WTC11 (cell line): ENCODE measurements at regions of chr19 and their contacts with region 1.

Region 1: GRCh38 chr19:30498707-30499106 is 126.5 kb downstream of the ZNF536 start:
- DNase-seq: peak; percentile 81
- ATAC-seq: peak; percentile 97
- H3K4me3 Mint-ChIP-seq: no peak overlapping the region
- H3K27ac Mint-ChIP-seq: no peak overlapping the region
- H3K4me1 Mint-ChIP-seq: peaks cover 3% of the 10 kb centered on the region
- H3K27me3 Mint-ChIP-seq: no peaks in the 10 kb centered on the region
- CTCF ChIP-seq: peak; percentile 38; the same call in 1 of the 2 replicates

Region 2: GRCh38 chr19:30419568-30420180 is 79.0 kb before region 1 on chr19:
- CTCF ChIA-PET with region 1: no interaction called
- POLR2A ChIA-PET with region 1: no interaction called
- DNase-seq: no peak
- ATAC-seq: no peak
- H3K4me3 Mint-ChIP-seq: no peak overlapping the region
- H3K27ac Mint-ChIP-seq: no peak overlapping the region
- H3K4me1 Mint-ChIP-seq: 0 out of 2 replicates have a peak, but pooled peaks cover 3% of the 10 kb centered on the region
- H3K27me3 Mint-ChIP-seq: no peaks in the 10 kb centered on the region
- CTCF ChIP-seq: no peak

Region 3: DNA sequence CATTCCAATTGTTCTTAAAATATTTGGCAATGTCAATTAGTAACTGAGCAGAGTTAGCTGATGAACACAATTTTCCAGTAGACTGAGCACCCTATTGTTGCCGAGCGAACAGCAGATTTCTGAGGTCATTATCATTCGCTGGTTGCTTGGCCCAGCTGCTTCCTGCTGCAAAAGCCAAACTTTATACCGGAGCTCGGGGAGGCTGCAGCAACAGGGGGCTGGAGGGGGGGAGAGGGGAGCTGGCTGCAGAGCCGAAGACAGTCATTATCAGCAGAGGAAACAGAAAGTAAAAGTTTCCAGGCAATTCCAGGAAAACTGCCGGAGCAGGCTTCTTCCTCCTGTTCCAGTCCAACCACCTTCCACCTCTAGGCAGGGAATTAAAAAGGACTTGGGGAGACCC is 48.6 kb before region 1 on chr19:
- CTCF ChIA-PET with region 1: interaction called, 13 read pairs
- POLR2A ChIA-PET with region 1: no interaction called
- DNase-seq: peak; percentile 46
- ATAC-seq: peak; percentile 78
- H3K4me3 Mint-ChIP-seq: peak overlapping the region; percentile 63
- H3K27ac Mint-ChIP-seq: peak overlapping the region; percentile 82
- H3K4me1 Mint-ChIP-seq: peaks cover 46% of the 10 kb centered on the region
- H3K27me3 Mint-ChIP-seq: no peaks in the 10 kb centered on the region
- CTCF ChIP-seq: no peak

Region 4: DNA sequence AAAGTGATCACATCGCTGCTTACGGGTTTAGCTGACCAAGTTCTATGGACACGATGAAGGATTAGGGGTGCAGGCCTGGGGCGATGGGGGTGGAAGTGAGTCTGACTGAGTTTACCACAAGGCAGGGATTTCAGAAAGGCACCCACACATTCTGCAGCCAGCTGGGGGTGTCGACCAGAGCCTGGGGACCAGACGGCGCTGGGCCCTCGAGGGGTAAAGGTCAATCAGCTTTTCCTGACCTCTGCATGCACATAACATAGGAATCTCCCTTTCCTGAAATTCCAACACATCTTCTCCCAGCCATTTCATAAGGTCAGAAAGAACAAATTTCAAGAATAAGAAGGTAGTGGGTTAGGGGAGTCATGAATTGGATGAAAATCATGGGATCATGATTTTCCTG is 34.5 kb before region 1 on chr19:
- CTCF ChIA-PET with region 1: no interaction called
- POLR2A ChIA-PET with region 1: no interaction called
- DNase-seq: no peak
- ATAC-seq: no peak
- H3K4me3 Mint-ChIP-seq: no peak overlapping the region
- H3K27ac Mint-ChIP-seq: no peak overlapping the region
- H3K4me1 Mint-ChIP-seq: 0 out of 2 replicates have a peak, but pooled peaks cover 4% of the 10 kb centered on the region
- H3K27me3 Mint-ChIP-seq: no peaks in the 10 kb centered on the region; the same call in 1 of the 2 replicates
- CTCF ChIP-seq: no peak

Region 5: GRCh38 chr19:30479292-30479958 is 19.3 kb before region 1 on chr19:
- CTCF ChIA-PET with region 1: interaction called, 11 read pairs
- POLR2A ChIA-PET with region 1: no interaction called
- DNase-seq: no peak
- ATAC-seq: no peak
- H3K4me3 Mint-ChIP-seq: no peak overlapping the region
- H3K27ac Mint-ChIP-seq: no peak overlapping the region
- H3K4me1 Mint-ChIP-seq: no peaks in the 10 kb centered on the region
- H3K27me3 Mint-ChIP-seq: no peaks in the 10 kb centered on the region
- CTCF ChIP-seq: no peak

Region 6: GRCh38 chr19:30662211-30662861 is 163.6 kb after region 1 on chr19:
- CTCF ChIA-PET with region 1: interaction called, 15 read pairs
- POLR2A ChIA-PET with region 1: no interaction called
- DNase-seq: no peak
- ATAC-seq: no peak
- H3K4me3 Mint-ChIP-seq: peak overlapping the region; percentile 3; the same call in 1 of the 2 replicates
- H3K27ac Mint-ChIP-seq: no peak overlapping the region
- H3K4me1 Mint-ChIP-seq: peaks cover 33% of the 10 kb centered on the region
- H3K27me3 Mint-ChIP-seq: no peaks in the 10 kb centered on the region
- CTCF ChIP-seq: no peak

Region 7: GRCh38 chr19:30669329-30670010 is 170.8 kb after region 1 on chr19:
- CTCF ChIA-PET with region 1: interaction called, 15 read pairs
- POLR2A ChIA-PET with region 1: no interaction called
- DNase-seq: peak; percentile 86
- ATAC-seq: peak; percentile 55
- H3K4me3 Mint-ChIP-seq: peak overlapping the region; percentile 52
- H3K27ac Mint-ChIP-seq: no peak overlapping the region
- H3K4me1 Mint-ChIP-seq: peaks cover 14% of the 10 kb centered on the region
- H3K27me3 Mint-ChIP-seq: no peaks in the 10 kb centered on the region; the same call in 1 of the 2 replicates
- CTCF ChIP-seq: peak; percentile 77